Right ventricle myocardium superior (tissue), 1 donor: ENCODE measurements at regions of chr4 and their contacts with region 1.

Region 1: GRCh38 chr4:40976343-40976742 is 226.6 kb downstream of the NSUN7 start:
- DNase-seq: no peak
- ATAC-seq: peak; percentile 72

Region 2: DNA sequence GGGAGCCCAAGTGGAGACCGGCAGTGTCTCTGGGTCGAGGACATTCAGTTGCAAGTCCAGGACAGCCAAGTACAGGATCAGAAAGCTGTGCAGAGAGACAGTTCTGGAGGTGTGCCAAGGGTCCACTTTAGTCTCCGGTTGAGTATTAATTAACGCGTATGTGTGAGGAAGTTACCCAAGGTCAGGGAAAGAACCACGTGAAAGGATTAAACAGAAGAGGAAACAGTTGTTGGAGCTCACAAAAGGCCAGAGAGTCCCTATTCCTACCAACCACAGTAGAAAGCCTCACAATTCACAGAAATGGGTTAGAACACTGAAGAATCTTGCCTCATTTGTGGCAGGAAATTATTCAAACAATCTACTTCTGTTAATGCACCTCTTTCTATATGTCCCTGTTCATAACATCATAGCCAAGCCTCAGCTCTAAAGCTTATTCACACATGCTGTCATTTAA is 244.5 kb before region 1 on chr4:
- intact Hi-C with region 1: no loop called
- DNase-seq: no peak
- ATAC-seq: peak; percentile 88

Region 3: GRCh38 chr4:40924096-40924792 is 52.1 kb before region 1 on chr4:
- intact Hi-C with region 1: loop called (anchors 10 kb)
- DNase-seq: peak; percentile 74
- ATAC-seq: peak; percentile 71